ENCODE measurements at regions of chr2 and their contacts with region 1.

Region 1: GRCh38 chr2:127064642-127065250 is 42.2 kb downstream of the BIN1 start:
- DNase-seq: peak in 2 of 9 donors; percentile 33 to 82
- ATAC-seq: peak; percentile 83
- H3K4me3 ChIP-seq: no peak overlapping the region
- H3K4me3 Mint-ChIP-seq: no peak overlapping the region
- H3K27ac ChIP-seq: no peak overlapping the region
- H3K27ac Mint-ChIP-seq: peak overlapping the region in 1 of 9 donors; percentile 18
- H3K4me1 ChIP-seq: peaks cover 5 to 9% of the 10 kb centered on the region in 2 donors
- H3K4me1 Mint-ChIP-seq: peaks cover 6 to 23% (median 12%) of the 10 kb centered on the region in 7 donors
- H3K27me3 ChIP-seq: no peaks in the 10 kb centered on the region
- H3K27me3 Mint-ChIP-seq: no peaks in the 10 kb centered on the region

Region 2: DNA sequence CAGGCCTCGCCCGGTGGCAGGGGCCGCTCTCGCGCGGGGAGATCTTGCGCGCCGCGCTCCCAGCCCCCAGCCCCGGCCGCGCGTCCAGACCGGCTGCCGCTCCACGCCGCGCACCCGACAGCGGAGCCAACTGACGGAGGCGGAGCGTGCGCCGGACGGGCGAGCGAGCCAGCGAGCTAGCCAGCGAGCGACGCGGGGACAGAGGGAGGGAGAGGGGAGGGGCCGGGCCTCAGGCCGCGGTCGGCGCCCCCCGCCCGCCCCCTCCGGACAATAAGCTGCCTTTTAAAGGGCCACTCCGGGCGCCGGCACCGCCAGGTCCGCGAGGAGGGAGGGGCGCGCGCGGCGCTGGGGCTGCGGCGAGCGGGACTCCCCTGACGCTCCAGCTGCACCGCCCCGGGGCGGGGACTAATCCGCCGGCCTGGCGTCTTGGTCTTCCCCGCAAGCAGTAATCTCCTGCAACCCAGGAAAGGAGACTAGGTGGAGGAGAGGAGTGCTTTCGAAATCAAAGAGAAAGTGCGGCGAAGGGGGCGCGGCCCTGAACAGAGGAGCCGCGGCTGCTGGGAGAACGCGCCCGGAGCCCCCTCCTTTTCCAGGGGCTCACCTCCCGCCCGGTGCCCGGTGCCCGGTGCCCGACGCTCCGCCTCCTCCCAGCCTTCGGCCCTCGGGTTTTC is 42.3 kb after region 1 on chr2 and contains the start of gene BIN1:
- CTCF ChIA-PET with region 1: interaction called, 5 read pairs
- POLR2A ChIA-PET with region 1: no interaction called
- intact Hi-C with region 1: loop called (anchors 1 to 2 kb)
- DNase-seq: peak; percentile 39 to 81 (median 53)
- ATAC-seq: peak; percentile 90
- H3K4me3 ChIP-seq: peak within 1 kb of the TSS; percentile 66
- H3K4me3 Mint-ChIP-seq: peak within 1 kb of the TSS; percentile 79 to 96 (median 90)
- H3K27ac ChIP-seq: peak within 1 kb of the TSS; percentile 22
- H3K27ac Mint-ChIP-seq: peak within 1 kb of the TSS in 5 of 9 donors; percentile 3 to 47 (median 38)
- H3K4me1 ChIP-seq: peaks cover 4% of the 10 kb centered on the region in 2 donors
- H3K4me1 Mint-ChIP-seq: peaks cover 2 to 8% (median 5%) of the 10 kb centered on the region in 7 donors
- H3K27me3 ChIP-seq: no peaks in the 10 kb centered on the region
- H3K27me3 Mint-ChIP-seq: peaks cover 0 to 57% (median 10%) of the 10 kb centered on the region in 5 donors
- total RNA-seq, gene BIN1: 103 to 120 (median 109) TPM

Region 3: GRCh38 chr2:127143841-127144782 is 79.4 kb after region 1 on chr2:
- CTCF ChIA-PET with region 1: interaction called, 6 read pairs
- POLR2A ChIA-PET with region 1: no interaction called
- intact Hi-C with region 1: loop called in 1 of 2 experiments (anchors 1 kb)
- DNase-seq: no peak
- ATAC-seq: no peak
- H3K4me3 ChIP-seq: no peak overlapping the region
- H3K4me3 Mint-ChIP-seq: no peak overlapping the region
- H3K27ac ChIP-seq: no peak overlapping the region
- H3K27ac Mint-ChIP-seq: no peak overlapping the region
- H3K4me1 ChIP-seq: no peaks in the 10 kb centered on the region
- H3K4me1 Mint-ChIP-seq: peaks cover 0 to 4% (median 0%) of the 10 kb centered on the region in 7 donors
- H3K27me3 ChIP-seq: no peaks in the 10 kb centered on the region
- H3K27me3 Mint-ChIP-seq: peaks cover 0 to 20% (median 3%) of the 10 kb centered on the region in 5 donors

Region 4: DNA sequence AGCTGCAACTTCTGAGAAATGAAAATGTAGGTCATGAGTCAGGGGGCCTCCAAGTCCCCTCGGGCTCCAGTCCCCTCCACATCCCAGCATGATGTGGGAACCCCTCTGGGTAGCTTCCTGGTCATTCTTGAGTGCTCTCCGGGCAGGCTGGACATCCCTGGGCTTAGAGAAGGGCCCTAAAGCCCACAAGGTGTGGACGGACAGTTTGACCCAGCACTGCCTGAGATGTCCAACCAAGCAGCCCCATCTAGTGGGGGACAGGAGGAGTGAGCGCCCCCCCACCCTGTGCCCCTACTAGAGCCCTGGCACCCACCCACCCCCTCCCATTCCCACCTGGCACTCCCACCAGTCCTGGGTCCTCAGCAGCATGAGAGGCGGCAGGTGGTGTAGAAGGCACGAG is 109.4 kb after region 1 on chr2:
- CTCF ChIA-PET with region 1: interaction called, 5 read pairs
- POLR2A ChIA-PET with region 1: no interaction called
- intact Hi-C with region 1: loop called (anchors 1 kb)
- DNase-seq: no peak
- ATAC-seq: no peak
- H3K4me3 ChIP-seq: no peak overlapping the region
- H3K4me3 Mint-ChIP-seq: no peak overlapping the region
- H3K27ac ChIP-seq: no peak overlapping the region
- H3K27ac Mint-ChIP-seq: no peak overlapping the region
- H3K4me1 ChIP-seq: no peaks in the 10 kb centered on the region
- H3K4me1 Mint-ChIP-seq: no peaks in the 10 kb centered on the region
- H3K27me3 ChIP-seq: no peaks in the 10 kb centered on the region
- H3K27me3 Mint-ChIP-seq: peaks cover 0 to 13% (median 1%) of the 10 kb centered on the region in 5 donors

Region 5: GRCh38 chr2:127721311-127721977 is 656.7 kb after region 1 on chr2:
- CTCF ChIA-PET with region 1: no interaction called
- POLR2A ChIA-PET with region 1: no interaction called
- intact Hi-C with region 1: no loop called
- DNase-seq: no peak
- ATAC-seq: no peak
- H3K4me3 ChIP-seq: no peak overlapping the region
- H3K4me3 Mint-ChIP-seq: no peak overlapping the region
- H3K27ac ChIP-seq: no peak overlapping the region
- H3K27ac Mint-ChIP-seq: peak overlapping the region in 1 of 9 donors; percentile 22
- H3K4me1 ChIP-seq: no peaks in the 10 kb centered on the region
- H3K4me1 Mint-ChIP-seq: peaks cover 0 to 12% (median 0%) of the 10 kb centered on the region in 7 donors
- H3K27me3 ChIP-seq: no peaks in the 10 kb centered on the region
- H3K27me3 Mint-ChIP-seq: no peaks in the 10 kb centered on the region